ENCODE measurements at regions of chr4 and their contacts with region 1.

Region 1: DNA sequence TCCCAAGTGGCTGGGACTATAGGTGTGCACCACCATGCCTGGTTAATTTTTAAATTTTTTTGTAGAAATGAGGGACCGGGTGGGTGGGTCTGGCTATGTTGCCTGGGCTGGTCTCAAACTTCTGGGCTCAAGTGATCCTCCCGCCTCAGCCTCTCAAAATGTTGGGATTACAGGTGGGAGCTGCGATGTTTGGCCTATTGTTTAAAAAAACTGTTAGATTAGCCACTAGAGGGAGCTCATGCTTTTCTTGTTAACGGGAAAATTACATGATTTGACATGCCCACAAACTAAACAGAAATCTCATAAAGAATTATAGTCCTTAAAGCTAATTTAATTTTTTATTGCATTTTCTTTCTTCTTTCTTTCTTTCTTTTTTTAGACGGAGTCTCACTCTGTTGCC is 5.0 kb upstream of the SDAD1 start:
- DNase-seq: no peak
- H3K4me3 ChIP-seq: no peak overlapping the region
- H3K27ac ChIP-seq: no peak overlapping the region
- H3K27me3 ChIP-seq: no peaks in the 10 kb centered on the region
- CTCF ChIP-seq: peak; percentile 63

Region 2: DNA sequence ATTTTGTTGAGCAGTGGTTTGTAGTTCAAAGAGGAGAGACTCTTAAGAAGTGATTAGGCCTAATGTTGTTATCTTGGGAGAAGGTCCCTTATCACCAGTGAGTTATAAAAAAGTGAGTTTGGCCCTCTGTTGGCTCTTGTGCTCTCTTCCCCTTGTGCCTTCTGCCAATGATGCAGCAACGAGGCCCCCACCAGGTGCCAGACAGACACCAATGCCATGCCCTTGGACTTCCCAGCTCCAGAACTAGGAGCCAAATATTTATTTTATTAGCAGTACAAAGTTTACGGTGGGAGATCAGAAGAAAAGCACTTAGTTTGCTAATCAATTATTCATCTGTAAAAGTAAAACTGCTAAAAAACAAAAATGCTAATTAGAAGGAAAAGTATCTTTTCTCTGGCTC is 32.2 kb before region 1 on chr4:
- CTCF ChIA-PET with region 1: no interaction called
- POLR2A ChIA-PET with region 1: no interaction called
- DNase-seq: no peak
- H3K4me3 ChIP-seq: no peak overlapping the region
- H3K27ac ChIP-seq: no peak overlapping the region
- H3K27me3 ChIP-seq: no peaks in the 10 kb centered on the region
- CTCF ChIP-seq: no peak

Region 3: GRCh38 chr4:76007094-76007862 is 11.6 kb after region 1 on chr4 and contains the start of gene CXCL9:
- CTCF ChIA-PET with region 1: interaction called, 20 read pairs
- POLR2A ChIA-PET with region 1: interaction called, 3 read pairs
- DNase-seq: no peak
- H3K4me3 ChIP-seq: no peak within 1 kb of the TSS
- H3K27ac ChIP-seq: no peak within 1 kb of the TSS
- H3K27me3 ChIP-seq: no peaks in the 10 kb centered on the region
- CTCF ChIP-seq: no peak
- polyA plus RNA-seq, gene CXCL9: not detected in 2 replicates

Region 4: DNA sequence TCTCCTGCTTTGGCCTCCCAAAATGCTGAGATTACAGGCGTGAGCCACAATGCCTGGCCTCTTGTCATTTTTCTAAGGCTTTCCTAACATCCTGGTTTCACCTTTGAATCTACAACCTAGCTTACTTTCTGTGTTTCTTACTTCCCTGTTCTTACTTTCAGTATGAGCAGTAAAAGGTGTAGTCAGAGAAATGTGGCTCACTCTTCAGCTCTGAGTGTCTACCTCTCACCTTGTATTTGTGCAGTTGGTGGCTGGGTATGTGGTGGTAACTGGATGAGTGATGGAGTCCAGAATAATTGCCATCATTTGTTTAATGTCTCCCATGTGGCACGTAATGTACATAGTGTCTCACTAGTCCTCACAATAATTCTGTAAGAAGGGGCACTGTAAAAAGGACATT is 59.3 kb after region 1 on chr4:
- CTCF ChIA-PET with region 1: interaction called, 36 read pairs
- POLR2A ChIA-PET with region 1: no interaction called
- DNase-seq: no peak
- H3K4me3 ChIP-seq: no peak overlapping the region
- H3K27ac ChIP-seq: no peak overlapping the region
- H3K27me3 ChIP-seq: peaks cover 8% of the 10 kb centered on the region
- CTCF ChIP-seq: no peak

Region 5: GRCh38 chr4:76067652-76068286 is 72.0 kb after region 1 on chr4:
- CTCF ChIA-PET with region 1: interaction called, 163 read pairs
- POLR2A ChIA-PET with region 1: interaction called, 3 read pairs
- DNase-seq: peak; percentile 34
- H3K4me3 ChIP-seq: no peak overlapping the region
- H3K27ac ChIP-seq: no peak overlapping the region
- H3K27me3 ChIP-seq: no peaks in the 10 kb centered on the region
- CTCF ChIP-seq: peak; percentile 88

Region 6: DNA sequence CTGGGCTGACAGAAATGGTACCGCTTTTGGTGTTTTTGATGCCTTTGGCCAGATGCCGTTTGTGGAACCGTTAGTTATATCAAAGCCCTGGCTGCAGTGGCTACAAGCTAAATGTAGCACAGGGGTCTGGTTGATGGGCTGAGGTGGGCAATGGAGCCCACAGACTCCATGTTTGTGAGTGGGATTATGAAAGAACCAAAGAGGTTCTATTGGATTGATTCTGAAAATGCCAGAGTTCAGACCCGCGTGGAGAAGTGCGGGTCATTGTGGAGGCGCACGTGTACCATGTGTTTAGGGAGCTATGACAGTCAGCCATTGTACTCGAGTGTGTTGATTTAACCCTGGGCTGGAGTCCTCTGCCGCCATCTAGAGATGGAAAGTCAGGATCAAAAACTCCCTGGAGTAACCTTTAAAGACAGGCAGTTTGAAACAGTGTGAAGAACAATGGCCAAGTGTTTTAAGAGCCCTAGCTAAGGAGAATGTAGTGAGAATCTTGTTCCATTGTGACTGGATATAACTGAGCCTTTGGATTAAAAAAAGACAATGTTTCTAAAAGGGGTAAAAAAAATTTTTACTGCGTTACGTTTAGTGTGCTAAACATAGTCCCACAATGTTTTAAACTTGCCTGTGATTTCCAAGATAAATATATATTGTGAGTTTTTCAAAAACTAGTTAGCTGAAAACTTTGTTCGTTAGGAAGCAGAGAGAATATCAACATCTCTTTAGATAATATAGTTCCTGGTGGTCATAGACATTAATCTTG is 91.5 kb after region 1 on chr4:
- CTCF ChIA-PET with region 1: interaction called, 64 read pairs
- POLR2A ChIA-PET with region 1: no interaction called
- DNase-seq: peak; percentile 7
- H3K4me3 ChIP-seq: no peak overlapping the region
- H3K27ac ChIP-seq: no peak overlapping the region
- H3K27me3 ChIP-seq: peaks cover 14% of the 10 kb centered on the region
- CTCF ChIP-seq: peak; percentile 77